CD14-positive monocyte (primary cell): ENCODE measurements at regions of chr16 and their contacts with region 1.

Region 1: DNA sequence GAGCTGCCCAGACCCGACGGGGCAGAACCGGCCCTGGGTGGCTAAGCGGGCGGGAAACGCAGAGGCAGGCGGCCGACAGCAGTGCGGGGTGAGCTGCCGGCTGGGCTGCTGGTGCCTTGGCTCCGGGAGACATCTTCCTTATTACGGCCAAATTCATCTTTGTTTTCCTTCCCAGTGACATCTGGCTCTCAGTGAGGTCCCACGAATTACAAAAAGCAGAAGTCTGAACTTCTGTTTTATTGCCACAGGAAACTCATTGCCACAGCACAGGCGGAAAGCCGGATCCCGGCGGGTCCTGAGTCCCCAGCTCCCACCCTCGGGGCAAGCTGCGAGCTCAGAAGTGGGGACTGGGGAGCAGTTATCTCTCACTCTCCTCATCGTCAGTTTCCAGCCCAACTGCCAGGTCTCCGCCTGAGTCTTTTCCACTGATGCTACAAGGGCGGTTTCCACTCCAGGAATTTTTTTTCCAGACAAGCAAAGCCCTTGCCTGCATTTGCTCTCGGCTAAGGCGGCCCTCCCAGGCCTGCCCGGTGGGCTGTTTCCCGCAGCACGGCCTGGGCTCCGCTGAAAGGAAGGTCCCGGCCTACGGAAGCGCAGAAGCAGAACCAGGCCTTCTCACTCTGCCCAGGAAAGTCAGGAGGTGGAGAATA is 40.3 kb downstream of the CBFA2T3 start:
- DNase-seq: peak; percentile 78 to 93 (median 86)
- H3K4me3 ChIP-seq: peak overlapping the region; percentile 32 to 89 (median 58)
- H3K4me3 Mint-ChIP-seq: peak overlapping the region; percentile 81 to 89
- H3K27ac ChIP-seq: peak overlapping the region; percentile 80 to 86
- H3K27ac Mint-ChIP-seq: peak overlapping the region; percentile 86 to 98 (median 92)
- H3K4me1 ChIP-seq: peaks cover 48 to 53% of the 10 kb centered on the region in 2 donors
- H3K4me1 Mint-ChIP-seq: peaks cover 45% of the 10 kb centered on the region
- H3K27me3 ChIP-seq: no peaks in the 10 kb centered on the region
- H3K27me3 Mint-ChIP-seq: peaks cover 0 to 2% (median 0%) of the 10 kb centered on the region in 3 donors
- CTCF ChIP-seq: no peak

Region 2: GRCh38 chr16:88905563-88905962 is 31.1 kb before region 1 on chr16:
- intact Hi-C with region 1: no loop called
- DNase-seq: peak in 1 of 3 donors; percentile 9
- H3K4me3 ChIP-seq: no peak overlapping the region
- H3K4me3 Mint-ChIP-seq: no peak overlapping the region
- H3K27ac ChIP-seq: no peak overlapping the region
- H3K27ac Mint-ChIP-seq: no peak overlapping the region
- H3K4me1 ChIP-seq: peaks cover 0 to 8% of the 10 kb centered on the region in 2 donors
- H3K4me1 Mint-ChIP-seq: peaks cover 9% of the 10 kb centered on the region
- H3K27me3 ChIP-seq: no peaks in the 10 kb centered on the region
- H3K27me3 Mint-ChIP-seq: no peaks in the 10 kb centered on the region
- CTCF ChIP-seq: no peak

Region 3: DNA sequence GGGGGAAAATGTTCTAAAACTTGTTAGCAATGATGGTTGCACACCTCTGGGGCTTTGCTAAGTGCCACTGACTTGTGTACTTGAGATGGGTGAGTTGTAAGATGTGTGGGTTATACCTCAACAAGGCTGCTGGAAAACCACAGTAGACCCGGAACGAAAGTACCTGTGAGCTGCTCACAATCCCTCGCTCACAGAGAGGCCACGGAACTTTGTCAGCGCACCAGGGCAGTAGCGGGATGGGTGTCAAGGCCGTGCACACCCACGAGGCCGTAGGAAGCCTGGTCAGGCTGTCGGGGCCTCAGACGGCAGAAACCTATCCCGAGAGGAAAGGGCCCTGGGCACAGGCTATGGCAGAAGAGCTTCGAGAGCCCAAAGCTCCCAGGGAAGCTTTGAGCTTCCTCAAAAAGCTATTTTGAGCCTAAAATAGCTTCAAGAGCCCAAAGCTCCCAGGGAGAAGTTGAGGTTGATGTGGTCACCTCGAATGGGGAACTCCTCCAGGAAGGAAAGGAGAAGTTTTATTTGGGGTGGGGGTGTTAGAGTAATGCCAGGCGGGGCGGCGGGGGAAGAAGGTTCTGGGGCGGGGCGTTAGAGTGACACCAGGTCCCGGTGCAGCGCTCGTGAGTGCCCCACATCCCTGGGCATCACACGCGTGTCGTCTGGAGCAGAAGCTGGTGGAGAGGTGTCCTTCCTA is 21.4 kb after region 1 on chr16:
- intact Hi-C with region 1: loop called in 1 of 2 experiments (anchors 2 kb)
- DNase-seq: peak; percentile 86 to 95 (median 93)
- H3K4me3 ChIP-seq: peak overlapping the region; percentile 21 to 74 (median 36)
- H3K4me3 Mint-ChIP-seq: peak overlapping the region; percentile 79 to 93
- H3K27ac ChIP-seq: peak overlapping the region; percentile 62 to 73
- H3K27ac Mint-ChIP-seq: peak overlapping the region; percentile 82 to 94 (median 90)
- H3K4me1 ChIP-seq: peaks cover 37 to 41% of the 10 kb centered on the region in 2 donors
- H3K4me1 Mint-ChIP-seq: peaks cover 52% of the 10 kb centered on the region
- H3K27me3 ChIP-seq: no peaks in the 10 kb centered on the region
- H3K27me3 Mint-ChIP-seq: peaks cover 6 to 19% (median 6%) of the 10 kb centered on the region in 3 donors
- CTCF ChIP-seq: no peak

Region 4: GRCh38 chr16:88977018-88977811 is 40.5 kb after region 1 on chr16 and contains the start of gene CBFA2T3:
- intact Hi-C with region 1: loop called (anchors 2 kb)
- DNase-seq: peak; percentile 76 to 86 (median 82)
- H3K4me3 ChIP-seq: peak within 1 kb of the TSS; percentile 63 to 95 (median 73)
- H3K4me3 Mint-ChIP-seq: peak within 1 kb of the TSS; percentile 94 to 99
- H3K27ac ChIP-seq: peak within 1 kb of the TSS; percentile 12 to 84
- H3K27ac Mint-ChIP-seq: peak within 1 kb of the TSS; percentile 41 to 88 (median 72)
- H3K4me1 ChIP-seq: peaks cover 68 to 75% of the 10 kb centered on the region in 2 donors
- H3K4me1 Mint-ChIP-seq: peaks cover 60% of the 10 kb centered on the region
- H3K27me3 ChIP-seq: no peaks in the 10 kb centered on the region
- H3K27me3 Mint-ChIP-seq: peaks cover 3 to 21% (median 5%) of the 10 kb centered on the region in 3 donors
- CTCF ChIP-seq: no peak
- polyA plus RNA-seq, gene CBFA2T3: 5.3 to 32.2 (median 6.2) TPM